Activated CD4-positive, alpha-beta memory T cell treated with anti-CD3 and anti-CD28 coated beads, Interleukin-2, amount 10 ng/mL, durations not matched to agents 7 days and 5 days (primary cell): ENCODE measurements at regions of chr11 and their contacts with region 1.

Region 1: DNA sequence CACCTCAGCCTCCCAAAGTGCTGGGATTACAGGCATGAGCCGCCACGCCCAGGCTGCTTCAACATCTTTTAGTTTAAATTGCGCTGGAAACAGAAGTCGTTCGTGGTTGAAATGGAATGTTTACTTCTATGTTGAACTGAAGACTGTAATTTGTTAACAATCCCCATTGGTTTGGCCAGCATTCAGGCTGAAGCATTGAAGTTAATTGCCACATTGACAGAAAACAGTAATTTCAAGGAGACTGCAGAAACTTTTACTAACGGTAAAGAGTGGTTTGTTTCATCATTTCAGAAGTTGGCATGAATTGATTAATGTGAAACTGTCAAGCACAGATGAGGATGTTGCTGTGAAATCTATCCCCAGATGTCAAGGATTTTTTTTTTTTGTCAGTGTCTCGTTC is 14.2 kb downstream of the AP5B1 start:
- DNase-seq: no peak
- H3K4me3 Mint-ChIP-seq: no peak overlapping the region
- H3K27ac Mint-ChIP-seq: no peak overlapping the region
- H3K4me1 Mint-ChIP-seq: peaks cover 7% of the 10 kb centered on the region
- H3K27me3 Mint-ChIP-seq: peaks cover 1% of the 10 kb centered on the region

Region 2: DNA sequence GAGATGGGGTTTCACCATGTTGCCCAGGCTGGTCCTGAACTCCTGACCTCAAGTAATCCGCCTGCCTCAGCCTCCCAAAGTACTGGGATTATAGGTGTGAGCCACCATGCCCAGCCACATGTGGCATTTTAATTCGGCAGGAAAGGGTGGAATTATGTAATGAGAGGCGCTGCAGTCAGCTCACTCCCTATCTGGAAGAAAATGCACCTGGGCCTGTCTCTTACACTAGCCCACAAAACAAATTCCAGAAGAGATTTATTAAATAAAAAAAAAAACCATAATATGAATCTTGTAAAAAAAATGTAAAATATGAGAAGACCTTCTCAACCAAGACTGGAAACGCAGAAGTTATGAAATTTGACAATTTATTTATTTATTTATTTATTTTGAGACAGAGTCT is 62.7 kb before region 1 on chr11:
- CTCF ChIA-PET with region 1: interaction called, 16 read pairs
- POLR2A ChIA-PET with region 1: no interaction called
- DNase-seq: no peak
- H3K4me3 Mint-ChIP-seq: no peak overlapping the region
- H3K27ac Mint-ChIP-seq: no peak overlapping the region
- H3K4me1 Mint-ChIP-seq: peaks cover 12% of the 10 kb centered on the region
- H3K27me3 Mint-ChIP-seq: peaks cover 20% of the 10 kb centered on the region

Region 3: DNA sequence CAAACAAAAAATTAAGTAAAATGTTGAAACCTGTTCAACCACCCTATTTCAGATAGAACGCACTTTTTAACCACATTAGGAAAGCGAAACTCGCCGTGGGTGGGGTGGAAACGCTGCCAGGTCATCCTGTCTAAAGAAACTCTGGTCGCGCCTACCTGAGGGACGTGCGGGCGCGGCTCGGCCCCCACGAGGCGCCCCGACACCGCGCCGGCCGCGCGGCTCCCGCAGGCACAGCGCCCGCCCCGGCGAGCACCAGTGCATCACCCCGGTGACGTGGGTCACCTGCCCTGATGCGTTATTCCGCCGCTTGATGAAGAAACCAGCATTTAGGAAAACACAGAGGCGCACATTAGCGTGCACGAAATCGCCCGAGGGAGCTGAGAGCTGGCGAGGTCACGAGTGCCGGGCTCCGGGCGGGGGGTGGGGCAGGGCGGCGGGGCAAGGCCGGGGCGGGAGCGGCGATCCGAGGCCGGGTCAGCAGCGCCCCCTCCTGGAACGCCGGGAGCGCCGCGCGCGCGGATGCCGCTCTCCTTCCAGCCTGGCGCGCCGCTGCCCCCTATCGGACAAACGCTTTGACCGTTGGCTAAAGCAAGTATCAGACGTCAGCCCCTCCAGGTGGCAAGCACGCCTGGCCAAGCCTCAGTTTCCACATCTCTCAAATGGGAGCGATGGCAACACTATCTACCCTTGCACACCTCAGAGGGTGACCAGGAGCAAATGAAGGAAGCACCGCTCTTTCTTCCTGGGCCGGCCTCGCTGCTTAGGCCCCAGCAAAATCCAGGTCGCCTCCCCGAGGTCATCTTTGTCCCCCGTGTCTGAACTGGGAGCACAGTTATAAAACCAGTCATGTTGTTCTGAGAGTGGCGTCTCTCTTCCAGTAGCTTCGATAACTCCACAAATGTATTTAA is 51.6 kb after region 1 on chr11:
- CTCF ChIA-PET with region 1: interaction called, 17 read pairs
- POLR2A ChIA-PET with region 1: no interaction called
- DNase-seq: peak; percentile 94
- H3K4me3 Mint-ChIP-seq: peak overlapping the region; percentile 74
- H3K27ac Mint-ChIP-seq: peak overlapping the region; percentile 65
- H3K4me1 Mint-ChIP-seq: peaks cover 17% of the 10 kb centered on the region
- H3K27me3 Mint-ChIP-seq: peaks cover 17% of the 10 kb centered on the region

Region 4: GRCh38 chr11:65888163-65888814 is 121.8 kb after region 1 on chr11 and contains the start of gene FIBP:
- CTCF ChIA-PET with region 1: no interaction called
- POLR2A ChIA-PET with region 1: no interaction called
- DNase-seq: peak; percentile 98
- H3K4me3 Mint-ChIP-seq: peak within 1 kb of the TSS; percentile 97
- H3K27ac Mint-ChIP-seq: peak within 1 kb of the TSS; percentile 90
- H3K4me1 Mint-ChIP-seq: peaks cover 74% of the 10 kb centered on the region
- H3K27me3 Mint-ChIP-seq: no peaks in the 10 kb centered on the region
- total RNA-seq, gene FIBP: 71.7 to 77.4 TPM